BJ (cell line): ENCODE measurements at regions of chr6 and their contacts with region 1.

Region 1: DNA sequence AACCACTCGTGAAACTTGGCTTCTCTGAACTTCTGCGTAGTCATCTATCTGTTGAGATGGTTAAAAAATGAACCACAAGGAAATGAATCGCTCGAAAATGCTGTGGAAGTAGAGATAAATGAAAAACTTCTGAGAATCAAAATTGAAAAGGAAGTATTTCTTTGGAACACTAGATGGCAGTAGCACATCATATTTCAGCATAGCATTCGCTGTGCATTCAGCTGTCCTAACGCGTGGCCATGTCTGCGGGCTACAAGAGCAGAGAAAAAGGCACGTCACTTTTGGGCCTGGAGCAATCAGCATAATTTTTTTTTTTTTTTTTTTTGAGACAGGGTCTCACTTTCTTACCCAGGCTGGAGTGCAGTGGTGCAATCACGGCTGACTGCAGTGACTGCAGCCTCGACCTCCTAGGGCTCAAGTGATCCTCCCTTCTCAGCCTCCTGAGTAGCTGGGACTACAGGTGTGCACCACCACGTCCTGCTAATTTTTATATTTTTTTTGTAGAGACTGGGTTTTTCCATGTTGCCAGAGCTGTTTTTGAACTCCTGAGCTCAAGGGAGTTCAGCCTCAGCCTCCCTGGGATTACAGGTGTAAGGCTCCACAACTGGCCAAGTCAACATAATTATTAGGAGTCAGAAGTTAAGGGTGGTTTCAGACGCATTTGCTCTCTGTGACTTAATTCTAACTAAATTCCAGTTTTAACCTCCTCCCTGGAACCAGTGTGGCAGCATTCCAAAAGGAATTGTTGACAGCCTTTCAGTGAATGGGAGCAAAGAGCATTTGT is 8.8 kb upstream of the PERP start:
- DNase-seq: no peak
- H3K4me3 ChIP-seq: no peak overlapping the region
- H3K27me3 ChIP-seq: no peaks in the 10 kb centered on the region; the same call in 1 of the 2 replicates
- CTCF ChIP-seq: peak; percentile 60

Region 2: DNA sequence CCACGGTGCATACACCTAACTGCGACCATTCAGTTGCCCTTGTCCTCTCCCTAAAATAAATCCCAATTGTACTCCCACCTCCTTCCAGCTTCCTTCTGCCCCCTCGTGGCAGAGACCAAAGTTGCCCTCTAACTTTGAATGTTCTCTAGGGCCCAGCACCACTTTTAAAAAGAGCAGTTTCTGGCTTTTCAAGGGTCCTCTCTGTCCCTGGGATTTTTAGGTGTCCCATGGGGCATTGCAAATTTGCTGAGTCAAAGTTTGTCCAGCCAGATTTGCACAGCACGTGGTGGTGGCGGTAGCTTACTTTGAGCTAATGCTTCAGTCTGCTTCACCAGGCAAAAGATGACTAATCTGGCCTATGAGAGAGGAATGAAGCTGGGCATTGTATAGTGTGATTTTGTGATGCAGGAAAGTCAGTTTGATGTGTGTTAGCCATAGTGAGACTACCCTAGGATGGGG is 109.0 kb before region 1 on chr6:
- CTCF ChIA-PET with region 1: interaction called, 21 read pairs
- POLR2A ChIA-PET with region 1: no interaction called
- DNase-seq: no peak
- H3K4me3 ChIP-seq: no peak overlapping the region
- H3K27me3 ChIP-seq: 0 out of 2 replicates have a peak, but pooled peaks cover 2% of the 10 kb centered on the region
- CTCF ChIP-seq: peak; percentile 74

Region 3: DNA sequence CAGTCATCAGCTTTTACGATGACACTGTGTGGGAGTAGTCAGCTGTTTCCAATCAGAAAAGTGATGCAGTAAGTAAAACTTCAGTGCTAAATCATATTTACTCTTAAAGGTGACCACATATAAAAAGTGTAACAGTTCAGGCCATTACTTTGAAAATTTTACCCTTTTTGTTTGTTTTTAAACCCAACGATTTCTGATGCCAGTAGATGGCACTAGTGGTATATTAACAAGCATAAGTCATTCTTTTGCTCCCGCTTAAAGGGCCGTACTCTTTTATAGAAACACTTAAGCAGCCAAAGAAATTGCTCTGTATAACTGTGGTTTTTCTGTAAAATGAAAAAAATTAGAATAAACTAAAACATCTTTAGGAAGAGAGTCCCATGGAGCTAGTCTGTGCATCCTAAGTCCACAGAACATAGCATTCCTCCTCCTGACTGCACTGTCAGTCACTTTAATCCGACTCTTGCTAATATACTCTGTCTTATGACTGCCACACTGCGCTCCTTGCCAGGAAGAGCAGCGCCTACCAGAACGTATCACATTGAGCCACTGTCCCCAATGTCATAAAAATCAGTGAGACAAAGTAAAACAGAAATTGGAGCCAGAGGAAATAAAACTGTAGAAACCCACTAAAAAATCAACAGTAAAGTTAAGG is 313.0 kb after region 1 on chr6:
- CTCF ChIA-PET with region 1: interaction called, 13 read pairs
- POLR2A ChIA-PET with region 1: no interaction called
- DNase-seq: no peak
- H3K4me3 ChIP-seq: no peak overlapping the region
- H3K27me3 ChIP-seq: no peaks in the 10 kb centered on the region
- CTCF ChIP-seq: peak; percentile 66

Region 4: GRCh38 chr6:138517635-138518034 is 401.6 kb after region 1 on chr6:
- CTCF ChIA-PET with region 1: interaction called, 22 read pairs
- POLR2A ChIA-PET with region 1: no interaction called
- DNase-seq: no peak
- H3K4me3 ChIP-seq: no peak overlapping the region
- H3K27me3 ChIP-seq: no peaks in the 10 kb centered on the region
- CTCF ChIP-seq: peak; percentile 79

Region 5: DNA sequence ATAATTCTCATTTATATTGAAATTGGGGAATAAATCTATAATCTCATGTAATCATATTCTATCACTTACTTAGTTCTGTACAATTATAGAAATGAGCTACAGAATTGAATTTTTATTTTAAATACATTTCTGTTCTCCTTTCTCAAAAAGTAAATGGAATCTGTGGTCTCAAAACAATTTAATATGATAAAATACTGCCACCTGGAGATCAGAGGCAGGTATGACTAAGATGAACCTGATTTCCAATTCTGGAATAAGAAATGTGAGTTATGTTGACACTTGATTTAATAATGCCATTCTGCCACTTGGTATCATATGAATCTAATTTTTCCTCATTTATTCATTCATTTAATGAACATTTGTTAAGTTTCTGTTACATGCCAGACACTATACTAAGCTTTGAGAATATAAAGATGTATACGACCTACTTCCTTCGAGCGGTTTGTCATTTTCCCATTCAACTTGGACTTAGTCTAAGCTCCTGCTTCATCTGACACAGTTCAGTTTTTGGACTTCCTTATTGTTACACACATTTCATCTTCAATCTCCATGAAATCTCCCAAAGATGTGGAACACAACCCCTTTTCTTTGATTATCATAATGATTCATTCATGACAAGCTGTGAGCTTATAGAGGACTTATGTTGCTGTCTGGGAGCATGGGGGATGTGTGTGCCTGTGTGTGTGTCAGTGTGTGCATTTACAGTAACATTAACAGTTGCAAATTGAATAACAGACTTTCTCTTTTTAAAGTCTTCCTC is 650.0 kb after region 1 on chr6:
- CTCF ChIA-PET with region 1: interaction called, 18 read pairs
- POLR2A ChIA-PET with region 1: no interaction called
- DNase-seq: peak; percentile 7
- H3K4me3 ChIP-seq: no peak overlapping the region
- H3K27me3 ChIP-seq: no peaks in the 10 kb centered on the region
- CTCF ChIP-seq: peak; percentile 53